GM12878 (cell line): ENCODE measurements at regions of chr5 and their contacts with region 1.

Region 1: GRCh38 chr5:139560752-139561654 is at the start of gene UBE2D2:
- DNase-seq: peak; percentile 92
- ATAC-seq: peak; percentile 87
- H3K4me3 ChIP-seq: peak within 1 kb of the TSS; percentile 75
- H3K27ac ChIP-seq: peak within 1 kb of the TSS; percentile 69
- H3K4me1 ChIP-seq: peaks cover 20% of the 10 kb centered on the region
- H3K27me3 ChIP-seq: no peaks in the 10 kb centered on the region
- CTCF ChIP-seq: no peak
- EP300 ChIP-seq: no peak
- POLR2A ChIP-seq: peak; percentile 87
- RAD21 ChIP-seq: no peak
- polyA plus RNA-seq, gene UBE2D2: 58.6 to 120 TPM

Region 2: DNA sequence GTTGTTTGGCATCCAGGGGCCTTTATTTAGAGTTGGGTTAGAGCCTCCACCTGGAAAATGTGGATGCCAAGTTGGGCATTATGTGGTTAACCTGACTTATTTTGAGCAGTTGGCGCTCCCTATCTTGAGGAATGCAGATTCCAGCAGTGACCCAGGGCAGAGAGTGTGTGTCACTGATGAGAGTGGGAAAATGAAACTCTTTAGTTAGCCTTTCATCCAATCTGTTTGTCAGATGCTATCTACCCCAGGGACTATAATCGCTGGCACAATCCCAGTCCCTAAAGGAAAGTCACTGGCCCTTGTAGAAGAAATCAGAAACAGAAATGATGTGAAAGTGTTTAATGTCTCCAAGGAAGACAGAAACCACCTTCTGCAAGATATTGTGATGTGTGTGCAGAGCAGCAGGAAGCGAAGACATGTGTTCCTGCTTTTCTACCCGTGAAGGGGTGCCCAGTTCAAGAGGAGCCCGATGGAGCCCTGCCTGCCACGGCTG is 68.3 kb before region 1 on chr5:
- CTCF ChIA-PET with region 1: no interaction called
- POLR2A ChIA-PET with region 1: no interaction called
- RAD21 ChIA-PET with region 1: no interaction called
- SMC1A ChIA-PET with region 1: no interaction called
- in situ Hi-C with region 1: no loop called
- intact Hi-C with region 1: no loop called
- DNase-seq: no peak
- ATAC-seq: no peak
- H3K4me3 ChIP-seq: no peak overlapping the region
- H3K27ac ChIP-seq: no peak overlapping the region
- H3K4me1 ChIP-seq: peaks cover 7% of the 10 kb centered on the region
- H3K27me3 ChIP-seq: no peaks in the 10 kb centered on the region
- CTCF ChIP-seq: no peak
- EP300 ChIP-seq: no peak
- POLR2A ChIP-seq: no peak
- RAD21 ChIP-seq: no peak

Region 3: DNA sequence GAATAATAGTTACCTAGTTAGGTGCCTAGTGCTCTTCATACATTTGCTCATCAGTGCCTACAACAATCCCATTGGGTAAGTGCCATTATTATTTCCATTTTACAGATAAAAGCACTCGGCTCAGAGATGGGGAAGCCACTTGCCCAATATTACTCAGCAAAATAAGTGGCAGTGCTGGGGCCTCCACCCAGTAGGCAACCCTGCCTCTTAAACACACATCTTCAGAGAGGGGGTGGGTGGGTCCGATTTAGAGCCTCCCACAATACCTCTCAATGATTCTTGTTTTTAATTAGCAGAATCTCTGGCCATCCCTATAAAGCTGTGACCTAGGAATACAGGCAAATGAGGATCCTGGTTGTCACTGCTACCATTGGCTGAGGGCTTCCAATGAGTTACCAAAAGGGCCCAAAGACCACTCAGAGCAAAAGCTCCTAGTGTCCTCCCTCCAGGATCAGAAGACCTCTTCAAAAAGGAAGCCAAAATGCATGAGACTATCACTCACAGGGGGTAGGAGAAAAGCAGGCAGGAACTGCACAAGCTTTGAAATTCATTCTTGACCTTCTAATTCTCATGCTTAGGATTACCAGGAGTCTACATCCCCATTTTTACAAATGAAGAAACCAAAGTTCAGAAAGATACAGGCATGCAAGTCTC is 35.9 kb before region 1 on chr5:
- CTCF ChIA-PET with region 1: interaction called, 13 read pairs
- POLR2A ChIA-PET with region 1: interaction called, 43 read pairs
- RAD21 ChIA-PET with region 1: interaction called, 49 read pairs
- SMC1A ChIA-PET with region 1: interaction called, 31 read pairs
- in situ Hi-C with region 1: no loop called
- intact Hi-C with region 1: loop called (anchors 2 kb)
- DNase-seq: no peak
- ATAC-seq: peak; percentile 88
- H3K4me3 ChIP-seq: 0 out of 2 replicates have a peak overlapping the region, but pooled peaks have one; percentile 2
- H3K27ac ChIP-seq: peak overlapping the region; percentile 59
- H3K4me1 ChIP-seq: peaks cover 28% of the 10 kb centered on the region
- H3K27me3 ChIP-seq: no peaks in the 10 kb centered on the region
- CTCF ChIP-seq: no peak
- EP300 ChIP-seq: 0 out of 4 replicates have a peak, but pooled peaks of 1 of the 2 experiments have one; percentile 24
- POLR2A ChIP-seq: no peak
- RAD21 ChIP-seq: no peak

Region 4: GRCh38 chr5:139543423-139543991 is 17.5 kb before region 1 on chr5:
- CTCF ChIA-PET with region 1: interaction called, 6 read pairs
- POLR2A ChIA-PET with region 1: interaction called, 9 read pairs
- RAD21 ChIA-PET with region 1: interaction called, 8 read pairs
- SMC1A ChIA-PET with region 1: interaction called, 15 read pairs
- in situ Hi-C with region 1: no loop called
- intact Hi-C with region 1: no loop called
- DNase-seq: no peak
- ATAC-seq: peak; percentile 97
- H3K4me3 ChIP-seq: peak overlapping the region; percentile 29; the same call in 1 of the 2 replicates
- H3K27ac ChIP-seq: peak overlapping the region; percentile 36
- H3K4me1 ChIP-seq: peaks cover 9% of the 10 kb centered on the region
- H3K27me3 ChIP-seq: no peaks in the 10 kb centered on the region
- CTCF ChIP-seq: peak; percentile 29 to 72 (median 59); a peak in 5 of 6 replicates
- EP300 ChIP-seq: no peak
- POLR2A ChIP-seq: 0 out of 2 replicates have a peak, but pooled peaks have one; percentile 30
- RAD21 ChIP-seq: peak; percentile 53

Region 5: DNA sequence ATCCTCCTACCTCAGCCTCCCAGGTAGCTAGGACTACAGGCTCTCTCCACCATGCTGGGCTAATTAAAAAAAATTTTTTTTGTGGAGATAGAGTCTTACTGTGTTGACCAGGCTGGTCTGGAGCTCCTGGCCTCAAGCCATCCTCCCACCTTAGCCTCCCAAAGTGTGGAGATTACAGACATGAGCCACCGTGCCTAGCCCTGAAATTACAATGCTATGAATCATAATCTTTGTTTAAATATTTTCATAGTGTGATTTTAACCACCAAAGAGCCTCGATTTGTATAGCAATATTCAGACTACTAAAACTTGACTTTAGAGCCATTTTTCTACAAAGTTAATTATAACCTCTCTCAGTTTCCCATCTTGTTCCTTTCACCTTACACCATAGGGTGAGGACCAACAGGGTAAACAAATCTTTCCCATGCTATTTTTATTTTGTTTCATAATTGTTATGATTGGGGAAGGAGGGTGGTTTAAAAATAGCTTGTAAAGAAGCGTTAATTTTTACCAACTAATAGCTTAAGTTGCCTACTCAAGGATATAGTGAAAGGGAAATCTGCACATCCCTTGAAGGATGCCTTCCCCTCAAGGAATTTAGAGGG is 32.8 kb after region 1 on chr5:
- CTCF ChIA-PET with region 1: interaction called, 4 read pairs
- POLR2A ChIA-PET with region 1: interaction called, 5 read pairs
- RAD21 ChIA-PET with region 1: interaction called, 3 read pairs
- SMC1A ChIA-PET with region 1: interaction called, 12 read pairs
- in situ Hi-C with region 1: no loop called
- intact Hi-C with region 1: no loop called
- DNase-seq: no peak
- ATAC-seq: peak; percentile 44
- H3K4me3 ChIP-seq: no peak overlapping the region
- H3K27ac ChIP-seq: peak overlapping the region; percentile 34
- H3K4me1 ChIP-seq: peaks cover 25% of the 10 kb centered on the region
- H3K27me3 ChIP-seq: no peaks in the 10 kb centered on the region
- CTCF ChIP-seq: no peak
- EP300 ChIP-seq: no peak
- POLR2A ChIP-seq: no peak
- RAD21 ChIP-seq: no peak

Region 6: GRCh38 chr5:139651853-139652787 is 91.1 kb after region 1 on chr5:
- CTCF ChIA-PET with region 1: interaction called, 4 read pairs
- POLR2A ChIA-PET with region 1: interaction called, 10 read pairs
- RAD21 ChIA-PET with region 1: interaction called, 4 read pairs
- SMC1A ChIA-PET with region 1: interaction called, 4 read pairs
- in situ Hi-C with region 1: no loop called
- intact Hi-C with region 1: no loop called
- DNase-seq: peak; percentile 85
- ATAC-seq: peak; percentile 51
- H3K4me3 ChIP-seq: peak overlapping the region; percentile 96
- H3K27ac ChIP-seq: peak overlapping the region; percentile 91
- H3K4me1 ChIP-seq: peaks cover 59% of the 10 kb centered on the region
- H3K27me3 ChIP-seq: no peaks in the 10 kb centered on the region
- CTCF ChIP-seq: no peak
- EP300 ChIP-seq: peak; percentile 55 to 62; a peak in 2 of 4 replicates
- POLR2A ChIP-seq: no peak
- RAD21 ChIP-seq: no peak